K562 (cell line): ENCODE measurements at regions of chr7 and their contacts with region 1.

Region 1: GRCh38 chr7:44196450-44196872 is 4.3 kb upstream of the YKT6 start:
- DNase-seq: peak; percentile 61 to 80 (median 72)
- ATAC-seq: peak; percentile 70
- H3K4me3 ChIP-seq: no peak overlapping the region
- H3K27ac ChIP-seq: no peak overlapping the region
- H3K4me1 ChIP-seq: peaks cover 2 to 3% of the 10 kb centered on the region in 2 experiments; a peak in 3 of 5 replicates
- H3K27me3 ChIP-seq: no peaks in the 10 kb centered on the region
- CTCF ChIP-seq: peak; percentile 82 to 88 (median 85)
- EP300 ChIP-seq: no peak
- POLR2A ChIP-seq: no peak
- RAD21 ChIP-seq: peak; percentile 71 to 85

Region 2: DNA sequence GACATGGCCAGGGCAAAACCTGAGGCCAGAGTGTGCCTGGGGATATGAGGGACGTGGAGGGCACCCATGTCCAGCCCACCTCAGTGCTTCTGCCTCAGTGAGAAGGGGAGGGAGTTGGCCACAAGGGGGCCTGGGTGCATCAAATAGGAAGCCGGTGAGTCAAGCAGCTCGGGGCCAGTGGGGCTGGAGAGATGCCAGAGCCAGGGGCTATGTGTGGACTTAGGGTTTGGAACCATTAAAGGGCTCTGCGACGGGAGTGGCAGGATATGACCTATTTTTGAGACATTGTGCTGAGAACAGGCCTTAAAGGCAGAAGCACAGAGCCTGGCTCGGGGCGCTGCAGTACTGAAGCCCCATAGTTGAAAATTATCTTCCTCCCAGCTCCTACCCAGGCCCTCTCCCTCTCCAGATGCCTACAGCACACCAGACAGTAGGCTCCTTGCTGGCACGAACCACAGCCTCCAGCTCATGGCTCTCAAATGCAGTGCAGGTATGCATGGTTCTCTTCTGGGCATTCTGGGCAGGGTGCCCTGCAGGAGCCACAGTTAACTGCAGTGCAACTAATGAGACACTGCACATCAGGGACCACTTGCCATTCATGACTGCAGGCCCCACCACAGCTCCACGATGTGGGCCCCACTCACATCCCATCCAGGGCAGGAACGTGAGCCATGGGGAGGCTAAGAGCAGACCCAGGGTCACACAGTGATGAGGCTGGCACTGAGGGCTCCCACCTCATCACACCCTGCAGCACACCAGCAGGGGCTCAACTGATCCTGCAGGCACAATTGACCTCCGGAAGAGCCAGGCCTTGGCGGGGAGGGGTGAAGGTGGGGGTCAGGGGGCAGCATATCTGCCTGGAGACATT is 123.9 kb before region 1 on chr7:
- CTCF ChIA-PET with region 1: no interaction called
- POLR2A ChIA-PET with region 1: interaction called, 6 read pairs
- in situ Hi-C with region 1: no loop called
- intact Hi-C with region 1: loop called (anchors 2 kb)
- DNase-seq: peak; percentile 68 to 82 (median 76)
- ATAC-seq: peak; percentile 90
- H3K4me3 ChIP-seq: no peak overlapping the region
- H3K27ac ChIP-seq: no peak overlapping the region
- H3K4me1 ChIP-seq: peaks cover 6 to 16% of the 10 kb centered on the region in 2 experiments; a peak in 3 of 5 replicates
- H3K27me3 ChIP-seq: peaks cover 0 to 7% of the 10 kb centered on the region in 2 experiments; a peak in 2 of 5 replicates
- CTCF ChIP-seq: peak; percentile 77 to 87 (median 80)
- EP300 ChIP-seq: no peak
- POLR2A ChIP-seq: no peak
- RAD21 ChIP-seq: peak; percentile 51 to 73

Region 3: DNA sequence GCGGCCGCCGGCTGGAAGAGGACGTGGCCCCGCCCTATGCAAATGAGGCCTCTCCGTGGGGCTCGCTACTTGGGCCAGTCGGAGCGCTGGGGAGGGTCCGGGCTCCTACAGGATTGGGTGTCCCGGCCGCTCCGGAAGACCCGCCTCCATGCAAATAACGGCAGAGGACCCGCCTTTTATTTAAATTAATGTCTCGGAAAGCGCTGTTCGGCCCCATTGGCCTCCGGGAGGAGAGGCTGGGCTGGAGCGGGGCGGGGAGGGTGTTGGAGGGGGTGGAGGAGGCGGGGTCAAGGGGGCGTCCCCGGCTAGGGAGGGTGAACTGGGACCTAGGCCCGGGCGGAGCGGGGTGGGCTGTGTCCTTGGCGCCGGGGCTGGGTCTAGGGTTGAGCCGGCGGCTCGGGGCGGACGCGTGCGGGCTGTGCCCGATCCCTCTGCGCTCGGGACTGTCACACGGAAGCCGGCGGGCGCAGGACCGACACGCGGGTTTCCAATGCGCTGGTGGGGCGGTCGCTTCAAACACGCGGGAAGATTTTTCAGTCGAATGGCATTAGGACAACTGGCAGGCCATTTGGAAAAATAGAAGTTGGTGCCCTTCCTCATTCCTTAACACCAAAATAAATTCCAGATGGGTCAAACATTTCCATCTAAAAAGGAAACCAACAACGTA is 113.8 kb before region 1 on chr7:
- CTCF ChIA-PET with region 1: no interaction called
- POLR2A ChIA-PET with region 1: interaction called, 4 read pairs
- in situ Hi-C with region 1: no loop called
- intact Hi-C with region 1: loop called (anchors 2 kb)
- DNase-seq: peak; percentile 97 to 99 (median 98)
- ATAC-seq: peak; percentile 97
- H3K4me3 ChIP-seq: peak overlapping the region; percentile 53
- H3K27ac ChIP-seq: peak overlapping the region; percentile 72
- H3K4me1 ChIP-seq: peaks cover 9 to 29% of the 10 kb centered on the region in 2 experiments; a peak in 4 of 5 replicates
- H3K27me3 ChIP-seq: no peaks in the 10 kb centered on the region
- CTCF ChIP-seq: no peak
- EP300 ChIP-seq: no peak
- POLR2A ChIP-seq: peak; percentile 71
- RAD21 ChIP-seq: no peak

Region 4: GRCh38 chr7:44131173-44132029 is 65.1 kb before region 1 on chr7:
- CTCF ChIA-PET with region 1: interaction called, 4 read pairs
- POLR2A ChIA-PET with region 1: interaction called, 4 read pairs
- in situ Hi-C with region 1: no loop called
- intact Hi-C with region 1: loop called (anchors 1 kb)
- DNase-seq: peak in 3 of 4 experiments; percentile 37 to 61 (median 49)
- ATAC-seq: peak; percentile 95
- H3K4me3 ChIP-seq: no peak overlapping the region
- H3K27ac ChIP-seq: no peak overlapping the region
- H3K4me1 ChIP-seq: 0 out of 5 replicates have a peak, but pooled peaks cover 0 to 4% of the 10 kb centered on the region in 2 experiments
- H3K27me3 ChIP-seq: no peaks in the 10 kb centered on the region
- CTCF ChIP-seq: peak; percentile 69 to 76 (median 72)
- EP300 ChIP-seq: no peak
- POLR2A ChIP-seq: no peak
- RAD21 ChIP-seq: peak; percentile 52 to 77

Region 5: GRCh38 chr7:44145969-44146911 is 50.2 kb before region 1 on chr7:
- CTCF ChIA-PET with region 1: no interaction called
- POLR2A ChIA-PET with region 1: no interaction called
- in situ Hi-C with region 1: no loop called
- intact Hi-C with region 1: loop called (anchors 5 kb)
- DNase-seq: peak; percentile 90 to 100 (median 100)
- ATAC-seq: peak; percentile 87
- H3K4me3 ChIP-seq: no peak overlapping the region; the same call in 1 of the 2 replicates
- H3K27ac ChIP-seq: peak overlapping the region; percentile 79
- H3K4me1 ChIP-seq: peaks cover 21 to 65% of the 10 kb centered on the region in 2 experiments
- H3K27me3 ChIP-seq: no peaks in the 10 kb centered on the region
- CTCF ChIP-seq: no peak
- EP300 ChIP-seq: no peak
- POLR2A ChIP-seq: peak; percentile 67
- RAD21 ChIP-seq: no peak

Region 6: GRCh38 chr7:44172803-44173424 is 23.5 kb before region 1 on chr7:
- CTCF ChIA-PET with region 1: no interaction called
- POLR2A ChIA-PET with region 1: no interaction called
- in situ Hi-C with region 1: no loop called
- intact Hi-C with region 1: no loop called
- DNase-seq: no peak
- ATAC-seq: no peak
- H3K4me3 ChIP-seq: no peak overlapping the region
- H3K27ac ChIP-seq: no peak overlapping the region
- H3K4me1 ChIP-seq: no peaks in the 10 kb centered on the region
- H3K27me3 ChIP-seq: peaks cover 29 to 34% of the 10 kb centered on the region in 2 experiments; a peak in 4 of 5 replicates
- CTCF ChIP-seq: no peak
- EP300 ChIP-seq: no peak
- POLR2A ChIP-seq: no peak
- RAD21 ChIP-seq: no peak